Activated CD4-positive, alpha-beta memory T cell treated with anti-CD3 and anti-CD28 coated beads for 36 hours (primary cell): ENCODE measurements at regions of chr19 and their contacts with region 1.

Region 1: GRCh38 chr19:35716801-35717666 is 769 bp upstream of the KMT2B start:
- DNase-seq: peak; percentile 97
- H3K4me3 Mint-ChIP-seq: peak overlapping the region; percentile 91
- H3K27ac Mint-ChIP-seq: peak overlapping the region; percentile 99
- H3K4me1 Mint-ChIP-seq: peaks cover 39% of the 10 kb centered on the region
- H3K27me3 Mint-ChIP-seq: peaks cover 1% of the 10 kb centered on the region

Region 2: GRCh38 chr19:35318650-35319448 is 398.2 kb before region 1 on chr19:
- CTCF ChIA-PET with region 1: no interaction called
- POLR2A ChIA-PET with region 1: no interaction called
- intact Hi-C with region 1: no loop called
- DNase-seq: peak; percentile 51
- H3K4me3 Mint-ChIP-seq: no peak overlapping the region
- H3K27ac Mint-ChIP-seq: no peak overlapping the region
- H3K4me1 Mint-ChIP-seq: peaks cover 7% of the 10 kb centered on the region
- H3K27me3 Mint-ChIP-seq: no peaks in the 10 kb centered on the region

Region 3: GRCh38 chr19:35657904-35658700 is 58.9 kb before region 1 on chr19:
- CTCF ChIA-PET with region 1: no interaction called
- POLR2A ChIA-PET with region 1: no interaction called
- intact Hi-C with region 1: no loop called
- DNase-seq: no peak
- H3K4me3 Mint-ChIP-seq: no peak overlapping the region
- H3K27ac Mint-ChIP-seq: no peak overlapping the region
- H3K4me1 Mint-ChIP-seq: no peaks in the 10 kb centered on the region
- H3K27me3 Mint-ChIP-seq: no peaks in the 10 kb centered on the region

Region 4: DNA sequence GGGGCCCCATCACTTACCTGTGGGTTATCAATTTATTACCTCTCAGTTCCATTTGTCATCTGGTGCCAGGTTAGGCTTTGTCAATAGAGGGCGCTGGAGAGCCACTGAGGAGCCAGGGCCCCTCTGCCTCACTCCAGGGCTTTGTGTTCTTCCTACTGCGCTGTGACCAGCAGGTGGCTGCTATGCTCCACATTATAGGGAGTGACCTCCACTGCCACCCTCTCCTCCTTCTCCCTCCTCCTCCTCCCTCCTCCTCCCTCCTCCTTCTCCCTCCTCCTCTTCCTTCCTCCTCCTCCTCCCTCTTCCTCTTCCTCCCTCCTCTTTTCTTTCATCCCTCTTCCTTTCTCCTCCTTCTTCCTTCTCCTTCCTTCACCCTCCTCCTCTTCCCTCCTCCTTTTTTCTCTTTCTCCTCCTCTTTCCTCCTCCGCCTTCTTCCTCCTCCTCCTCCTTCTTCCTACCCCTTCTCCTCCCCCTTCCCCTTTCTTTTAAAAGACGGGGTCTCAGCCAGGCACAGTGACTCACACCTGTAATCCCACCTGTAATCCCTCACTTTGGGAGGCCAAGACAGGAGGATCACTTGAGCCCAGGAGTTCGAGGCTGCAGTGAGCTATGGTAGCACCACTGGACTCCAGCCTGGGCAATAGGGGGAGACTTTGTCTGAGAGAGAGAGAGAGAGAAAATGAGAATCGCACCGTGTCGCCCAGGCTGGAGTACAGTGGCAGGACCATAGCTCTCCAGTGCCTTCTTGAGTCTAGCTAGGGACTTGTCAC is 23.0 kb before region 1 on chr19:
- CTCF ChIA-PET with region 1: interaction called, 197 read pairs
- POLR2A ChIA-PET with region 1: interaction called, 64 read pairs
- intact Hi-C with region 1: loop called (anchors 1 kb)
- DNase-seq: peak; percentile 94
- H3K4me3 Mint-ChIP-seq: no peak overlapping the region
- H3K27ac Mint-ChIP-seq: peak overlapping the region; percentile 54
- H3K4me1 Mint-ChIP-seq: peaks cover 14% of the 10 kb centered on the region
- H3K27me3 Mint-ChIP-seq: no peaks in the 10 kb centered on the region

Region 5: DNA sequence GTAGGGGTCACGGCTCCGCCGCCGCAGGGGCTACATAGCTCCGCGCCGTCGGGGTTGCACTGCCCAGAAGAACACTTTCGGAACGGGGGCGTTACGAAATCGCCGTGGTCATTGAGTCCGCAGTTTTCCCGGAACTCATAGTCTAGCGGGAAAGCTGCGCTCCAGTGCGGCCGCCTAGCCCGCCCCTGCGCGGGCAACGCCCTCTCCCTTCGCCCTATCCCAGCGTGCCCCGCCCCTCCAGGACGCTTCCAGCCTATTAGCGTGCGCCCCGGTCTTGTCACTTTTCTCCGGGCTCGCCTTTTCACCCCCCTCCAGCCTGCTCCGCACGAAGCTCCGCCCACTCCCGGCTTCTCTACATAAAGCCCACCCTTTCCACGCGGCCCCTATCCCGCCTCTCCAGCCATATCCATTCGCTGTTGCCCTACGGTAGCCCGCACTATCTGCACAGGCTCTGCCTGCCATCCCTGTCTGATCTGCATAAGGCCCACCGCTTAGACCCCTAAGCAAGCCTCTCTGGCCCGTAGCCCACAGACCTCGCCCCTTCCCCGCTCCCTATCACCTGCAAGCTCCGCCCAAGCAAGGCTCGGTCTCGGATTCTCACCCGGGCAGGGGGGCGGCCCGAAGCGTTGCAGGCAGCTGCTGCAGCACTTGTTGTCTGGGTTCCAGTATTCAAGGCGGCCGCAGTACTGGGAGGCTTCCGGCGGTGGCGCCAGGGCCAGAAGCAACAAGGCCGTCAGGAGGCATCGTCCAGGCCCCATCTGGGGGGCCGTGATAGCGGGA is 23.6 kb after region 1 on chr19:
- CTCF ChIA-PET with region 1: interaction called, 12 read pairs
- POLR2A ChIA-PET with region 1: interaction called, 45 read pairs
- intact Hi-C with region 1: loop called (anchors 1 kb)
- DNase-seq: peak; percentile 98
- H3K4me3 Mint-ChIP-seq: peak overlapping the region; percentile 89
- H3K27ac Mint-ChIP-seq: peak overlapping the region; percentile 90
- H3K4me1 Mint-ChIP-seq: peaks cover 31% of the 10 kb centered on the region
- H3K27me3 Mint-ChIP-seq: no peaks in the 10 kb centered on the region

Region 6: DNA sequence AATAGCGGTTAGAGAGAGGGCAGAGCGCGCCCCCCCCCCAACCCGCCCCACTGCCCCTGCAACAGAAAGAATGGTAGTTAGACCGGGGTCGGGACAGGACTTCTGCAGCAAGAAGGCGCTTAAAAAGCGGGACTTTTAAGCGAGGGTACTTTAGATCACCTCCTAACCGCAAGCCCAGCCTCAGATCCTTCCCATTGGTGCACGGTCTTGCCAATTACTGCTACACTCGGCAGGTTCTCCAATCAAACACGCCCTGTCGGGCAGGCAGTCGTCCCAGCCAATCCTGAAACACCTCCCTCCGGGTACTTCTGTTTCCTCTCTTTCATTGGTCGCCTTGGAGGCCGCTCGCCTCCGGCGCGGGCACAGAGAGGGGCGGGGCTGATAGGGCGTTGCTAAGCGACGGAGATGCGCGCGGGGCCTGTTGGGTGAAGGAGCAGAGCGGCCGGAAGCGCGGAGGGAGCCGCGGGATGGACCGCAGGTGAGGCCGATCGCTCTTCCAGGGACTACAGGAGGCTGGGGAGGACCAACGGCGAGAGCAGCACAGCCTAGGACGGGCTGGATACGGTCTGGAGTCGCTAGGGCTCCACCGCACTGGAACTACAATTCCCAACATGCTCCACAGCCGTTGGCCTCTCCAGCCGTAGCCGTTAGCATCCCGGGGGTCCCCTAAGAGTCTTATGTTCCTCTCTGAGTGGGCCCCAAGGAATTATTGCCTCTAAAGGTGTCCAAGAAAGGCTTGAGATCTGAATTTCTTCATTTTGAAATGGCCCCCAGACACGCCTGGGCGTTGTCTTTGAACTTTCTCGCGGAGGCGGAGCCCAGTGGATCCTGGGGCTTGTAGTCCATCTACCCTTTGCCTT is 40.9 kb after region 1 on chr19 and contains the start of gene PROSER3:
- CTCF ChIA-PET with region 1: no interaction called
- POLR2A ChIA-PET with region 1: no interaction called
- intact Hi-C with region 1: loop called (anchors 1 kb)
- DNase-seq: peak; percentile 99
- H3K4me3 Mint-ChIP-seq: peak within 1 kb of the TSS; percentile 88
- H3K27ac Mint-ChIP-seq: peak within 1 kb of the TSS; percentile 91
- H3K4me1 Mint-ChIP-seq: peaks cover 27% of the 10 kb centered on the region
- H3K27me3 Mint-ChIP-seq: no peaks in the 10 kb centered on the region
- total RNA-seq, gene PROSER3: 38.4 to 40.0 TPM

Region 7: GRCh38 chr19:35768082-35768421 is 51.0 kb after region 1 on chr19:
- CTCF ChIA-PET with region 1: no interaction called
- POLR2A ChIA-PET with region 1: no interaction called
- intact Hi-C with region 1: no loop called
- DNase-seq: no peak
- H3K4me3 Mint-ChIP-seq: no peak overlapping the region
- H3K27ac Mint-ChIP-seq: no peak overlapping the region
- H3K4me1 Mint-ChIP-seq: no peaks in the 10 kb centered on the region
- H3K27me3 Mint-ChIP-seq: no peaks in the 10 kb centered on the region

Region 8: DNA sequence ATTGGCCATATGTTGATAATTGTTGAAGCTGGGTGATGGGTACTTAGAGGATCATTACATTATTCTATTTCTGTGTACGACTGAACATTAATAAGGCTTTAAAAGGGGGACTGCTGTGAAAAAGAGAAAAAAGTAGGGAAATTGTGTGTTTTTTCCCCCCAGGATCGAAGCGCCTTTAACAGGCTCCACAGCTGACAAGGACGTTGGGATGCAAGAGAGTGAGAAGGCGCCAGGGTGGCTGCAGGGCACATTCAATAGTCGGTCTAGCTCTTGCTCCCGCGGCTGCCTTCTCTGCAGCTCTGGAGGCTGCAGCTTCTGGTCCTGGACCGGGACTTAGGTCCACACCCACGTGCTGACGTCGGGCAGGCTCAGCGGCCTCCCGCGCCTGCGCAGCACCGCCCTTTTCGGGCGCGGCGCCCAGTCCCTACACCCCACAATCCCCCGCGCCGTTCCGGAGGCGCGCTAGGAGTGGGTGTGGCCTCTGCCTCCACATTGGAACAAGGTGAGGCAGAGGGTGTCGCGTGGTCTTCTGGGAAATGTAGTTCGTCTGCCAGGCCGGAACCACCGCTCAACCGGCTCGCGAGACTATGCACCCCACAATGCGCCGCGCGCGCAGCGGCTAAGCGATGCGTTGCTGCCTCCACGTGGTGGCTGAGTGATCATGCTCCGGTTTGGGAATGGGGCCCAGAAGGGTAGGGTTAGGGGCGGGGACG is 214.3 kb after region 1 on chr19:
- CTCF ChIA-PET with region 1: interaction called, 5 read pairs
- POLR2A ChIA-PET with region 1: no interaction called
- intact Hi-C with region 1: loop called (anchors 1 kb)
- DNase-seq: peak; percentile 100
- H3K4me3 Mint-ChIP-seq: peak overlapping the region; percentile 62
- H3K27ac Mint-ChIP-seq: peak overlapping the region; percentile 79
- H3K4me1 Mint-ChIP-seq: peaks cover 30% of the 10 kb centered on the region
- H3K27me3 Mint-ChIP-seq: no peaks in the 10 kb centered on the region